GM18951 (cell line): ENCODE measurements at regions of chr14 and their contacts with region 1.

Region 1: DNA sequence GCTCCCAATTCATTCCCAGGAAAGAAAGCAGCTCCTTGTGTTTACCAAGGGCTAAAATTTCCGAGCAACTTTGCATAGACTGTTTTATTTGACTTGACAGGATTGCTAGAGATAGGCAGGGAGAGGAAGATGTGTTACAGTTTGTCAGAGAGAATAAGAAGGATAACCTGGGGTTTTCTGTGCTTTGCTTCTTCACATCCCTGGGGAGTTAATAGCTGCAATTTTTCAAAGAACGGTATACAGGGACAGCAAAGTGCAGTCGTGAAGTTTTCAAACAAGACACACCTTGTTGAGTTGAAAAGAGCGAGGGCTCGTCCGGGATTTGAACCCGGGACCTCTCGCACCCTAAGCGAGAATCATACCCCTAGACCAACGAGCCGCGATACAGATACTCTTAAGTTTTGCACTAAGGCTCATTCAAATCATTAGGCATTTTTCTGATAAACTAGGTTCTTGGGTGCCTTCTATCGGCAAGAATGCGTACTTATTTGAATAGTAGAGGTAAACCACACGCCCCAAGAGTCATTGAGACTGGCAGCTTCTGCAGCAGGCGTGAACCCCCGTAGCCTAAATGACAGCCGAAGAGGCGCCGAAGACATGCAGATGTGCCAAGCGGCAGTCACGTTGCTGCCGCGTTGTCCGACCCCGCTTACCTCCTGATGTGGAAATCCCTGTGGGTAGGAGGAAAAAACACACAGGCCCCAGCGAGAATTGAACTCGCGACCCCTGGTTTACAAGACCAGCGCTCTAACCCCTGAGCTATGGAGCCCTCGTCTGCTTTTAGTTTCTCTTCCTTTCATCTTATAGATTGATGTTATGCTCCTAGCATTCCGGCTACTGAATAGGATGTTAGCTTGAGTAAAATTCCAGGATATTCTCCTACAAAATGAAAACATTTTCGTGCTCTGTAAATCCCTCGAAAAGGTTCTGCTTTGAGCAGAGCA is 22.2 kb upstream of the RNASE12 start:
- POLR2A ChIP-seq: peak; percentile 34

Region 2: DNA sequence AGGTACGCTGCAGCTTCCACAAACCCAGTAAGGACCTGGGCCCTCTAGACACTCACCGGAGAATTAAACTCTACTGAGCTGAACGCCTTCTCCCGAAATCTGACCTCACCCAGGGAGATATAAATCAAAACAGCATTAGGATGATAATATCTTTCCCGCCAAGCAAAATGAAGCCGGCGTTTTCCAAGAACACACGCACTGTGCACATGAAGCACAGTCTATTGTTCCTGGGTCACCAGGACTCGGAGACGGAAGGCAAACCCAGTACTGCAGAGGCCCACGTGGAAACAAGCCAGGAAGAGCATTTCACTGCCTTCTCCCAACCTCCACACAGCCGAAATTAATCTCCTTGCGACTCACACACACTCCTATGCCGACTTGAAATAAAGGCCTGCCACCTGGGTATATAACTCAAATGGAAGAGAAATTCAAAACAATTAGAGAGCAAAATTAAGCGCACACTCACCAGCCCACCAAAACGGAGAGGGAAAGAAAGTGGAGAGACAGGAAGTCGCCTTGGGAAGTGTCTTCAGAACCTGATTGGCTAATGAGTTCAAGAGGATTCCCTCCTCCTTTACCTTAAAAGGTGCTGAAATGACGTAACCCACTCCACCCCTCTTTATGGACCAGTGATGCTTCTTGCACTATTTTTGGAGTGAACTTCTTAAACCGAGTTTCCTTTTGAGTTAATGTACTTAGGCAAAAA is 280.4 kb before region 1 on chr14 and contains the start of gene CCNB1IP1:
- in situ Hi-C with region 1: loop called (anchors 5 kb)
- POLR2A ChIP-seq: peak; percentile 63